Panc1 (cell line): ENCODE measurements at regions of chr9 and their contacts with region 1.

Region 1: DNA sequence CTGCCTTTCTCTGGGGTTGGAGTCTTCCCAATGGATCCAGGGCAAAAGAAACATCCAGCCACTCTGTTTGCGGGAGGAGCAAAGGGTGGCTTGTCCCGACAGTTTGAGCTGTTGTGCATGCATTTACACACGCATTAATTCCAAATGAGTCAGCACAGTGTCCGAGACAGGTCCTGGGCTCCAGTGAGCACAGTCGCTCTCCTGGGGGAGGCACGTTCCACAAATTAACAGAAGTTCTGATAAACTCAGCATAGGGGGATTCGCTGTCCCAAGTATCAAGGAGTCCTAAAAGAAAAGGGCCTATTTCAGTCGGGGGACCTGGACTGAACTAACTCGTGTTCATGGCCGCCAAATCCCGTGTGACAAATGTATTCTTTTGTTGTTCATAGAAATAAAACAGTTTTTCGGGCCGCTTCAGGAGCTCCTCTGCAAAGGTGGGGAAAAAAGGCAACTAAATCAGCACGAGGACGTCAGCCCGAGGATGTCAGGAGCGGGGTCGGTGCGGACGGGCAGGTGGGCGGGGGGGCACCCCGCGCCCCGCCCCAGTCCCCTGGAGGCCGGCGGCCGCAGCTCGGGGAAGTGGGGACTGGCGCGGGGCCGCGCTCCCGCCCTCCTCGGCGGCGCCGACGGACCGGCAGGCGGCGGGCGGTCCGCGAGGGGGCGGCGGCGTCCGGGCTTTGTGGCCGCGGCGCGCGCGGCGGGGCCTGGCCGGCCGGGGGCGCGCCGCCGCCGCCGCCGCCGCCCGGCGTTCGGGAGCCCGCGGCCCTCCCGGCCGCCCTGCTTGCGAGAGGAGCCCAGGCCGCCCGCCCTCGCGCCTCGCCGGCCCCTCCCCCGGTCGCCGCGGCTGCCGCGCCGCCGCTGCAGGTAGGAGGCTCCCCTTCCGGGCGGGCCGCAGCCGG is at the start of gene MSANTD3:
- DNase-seq: no peak
- ATAC-seq: peak; percentile 84
- H3K4me3 ChIP-seq: peak within 1 kb of the TSS; percentile 72 to 90
- H3K27ac ChIP-seq: peak within 1 kb of the TSS; percentile 94
- H3K4me1 ChIP-seq: peaks cover 20% of the 10 kb centered on the region
- H3K27me3 ChIP-seq: no peaks in the 10 kb centered on the region
- CTCF ChIP-seq: 0 out of 2 replicates have a peak, but pooled peaks have one; percentile 16
- total RNA-seq, gene MSANTD3: 58.7 TPM

Region 2: DNA sequence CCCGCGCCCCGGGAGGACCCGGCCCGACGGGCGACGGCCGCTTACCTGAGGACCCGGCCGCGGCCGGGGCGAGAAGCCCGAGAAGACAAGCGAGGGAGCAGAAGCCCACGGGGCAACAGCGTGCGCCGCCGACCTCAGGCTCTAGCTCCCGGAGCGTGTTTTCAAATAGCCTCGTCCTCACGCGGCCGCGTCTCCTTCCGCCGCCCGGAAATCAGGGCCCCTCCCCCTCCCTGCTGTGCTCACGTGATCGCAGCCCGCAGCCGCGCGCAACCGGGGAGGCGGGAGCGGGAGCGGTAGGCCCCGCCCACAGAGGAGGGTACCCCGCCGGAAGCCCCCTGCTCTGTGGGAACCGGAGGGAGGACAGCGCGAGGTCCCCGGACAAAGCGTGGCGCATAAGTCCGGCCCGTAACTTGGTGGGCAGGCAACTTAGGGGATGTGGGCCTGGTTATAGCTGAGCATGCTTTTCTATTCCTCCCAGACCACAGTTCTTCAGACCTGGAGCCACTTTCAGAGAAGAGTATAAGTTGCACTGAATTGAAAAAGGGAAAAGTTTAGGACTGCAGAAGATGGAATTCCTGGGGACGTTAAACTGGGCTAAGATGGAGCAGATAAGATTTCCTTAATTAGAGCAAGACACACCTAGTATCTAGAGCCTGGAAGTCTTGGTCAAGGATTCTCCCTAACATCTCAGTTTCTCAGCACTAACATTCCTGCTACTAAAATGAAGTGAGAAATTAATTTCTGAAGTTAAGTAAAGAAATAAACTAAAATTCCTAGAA is 73.9 kb before region 1 on chr9 and contains the start of gene TEX10:
- CTCF ChIA-PET with region 1: no interaction called
- POLR2A ChIA-PET with region 1: no interaction called
- in situ Hi-C with region 1: no loop called
- intact Hi-C with region 1: loop called (anchors 5 kb)
- DNase-seq: peak; percentile 20
- ATAC-seq: peak; percentile 93
- H3K4me3 ChIP-seq: peak within 1 kb of the TSS; percentile 86 to 89
- H3K27ac ChIP-seq: peak within 1 kb of the TSS; percentile 86
- H3K4me1 ChIP-seq: peaks cover 17% of the 10 kb centered on the region
- H3K27me3 ChIP-seq: no peaks in the 10 kb centered on the region
- CTCF ChIP-seq: no peak
- total RNA-seq, gene TEX10: 15.4 TPM

Region 3: DNA sequence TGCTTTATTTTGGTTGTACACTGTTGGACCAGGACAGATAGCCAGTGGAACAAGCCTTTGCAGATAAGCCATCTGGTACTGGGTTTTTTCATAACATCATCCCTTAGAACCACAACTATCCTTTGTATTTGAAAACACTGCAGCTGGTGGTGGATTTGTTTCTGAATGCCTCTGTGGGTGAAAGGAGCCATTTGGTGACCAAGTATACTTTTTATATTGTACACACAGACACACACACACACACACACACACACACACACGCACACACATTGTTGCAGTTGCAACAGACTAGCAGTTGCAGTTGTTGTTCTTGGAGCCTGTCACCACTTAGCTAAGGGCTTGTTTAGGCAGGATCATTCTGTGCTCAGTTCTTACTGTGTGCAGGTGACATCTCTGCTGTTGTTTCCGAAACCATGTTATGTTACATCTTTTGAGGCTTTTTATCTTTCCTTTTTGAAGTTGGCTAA is 128.2 kb after region 1 on chr9:
- CTCF ChIA-PET with region 1: no interaction called
- POLR2A ChIA-PET with region 1: no interaction called
- in situ Hi-C with region 1: no loop called
- intact Hi-C with region 1: no loop called
- DNase-seq: no peak
- ATAC-seq: no peak
- H3K4me3 ChIP-seq: no peak overlapping the region
- H3K27ac ChIP-seq: no peak overlapping the region
- H3K4me1 ChIP-seq: no peaks in the 10 kb centered on the region
- H3K27me3 ChIP-seq: no peaks in the 10 kb centered on the region
- CTCF ChIP-seq: no peak

Region 4: GRCh38 chr9:101907466-101907865 is 1480.7 kb after region 1 on chr9:
- CTCF ChIA-PET with region 1: no interaction called
- POLR2A ChIA-PET with region 1: interaction called, 16 read pairs
- in situ Hi-C with region 1: no loop called
- intact Hi-C with region 1: no loop called
- DNase-seq: no peak
- ATAC-seq: no peak
- H3K4me3 ChIP-seq: no peak overlapping the region
- H3K27ac ChIP-seq: no peak overlapping the region
- H3K4me1 ChIP-seq: no peaks in the 10 kb centered on the region
- H3K27me3 ChIP-seq: no peaks in the 10 kb centered on the region
- CTCF ChIP-seq: no peak